ENCODE measurements at regions of chr5 and their contacts with region 1.

Region 1: GRCh38 chr5:100903039-100903887 is at the start of gene ST8SIA4:
- DNase-seq: peak; percentile 86 to 97 (median 89)
- H3K4me3 ChIP-seq: peak within 1 kb of the TSS; percentile 88 to 89
- H3K4me3 Mint-ChIP-seq: peak within 1 kb of the TSS; percentile 89 to 100 (median 96)
- H3K27ac ChIP-seq: peak within 1 kb of the TSS; percentile 91
- H3K27ac Mint-ChIP-seq: peak within 1 kb of the TSS; percentile 97 to 98 (median 98)
- H3K4me1 ChIP-seq: peaks cover 34% of the 10 kb centered on the region
- H3K4me1 Mint-ChIP-seq: peaks cover 26 to 70% (median 42%) of the 10 kb centered on the region in 4 donors
- H3K27me3 ChIP-seq: no peaks in the 10 kb centered on the region
- H3K27me3 Mint-ChIP-seq: no peaks in the 10 kb centered on the region
- total RNA-seq, gene ST8SIA4: 27.7 to 28.7 TPM

Region 2: GRCh38 chr5:99032234-99033013 is 1870.8 kb before region 1 on chr5:
- CTCF ChIA-PET with region 1: no interaction called
- POLR2A ChIA-PET with region 1: interaction called, 3 read pairs
- intact Hi-C with region 1: loop called (anchors 5 kb)
- DNase-seq: peak in 3 of 5 donors; percentile 18 to 21 (median 19)
- H3K4me3 ChIP-seq: peak overlapping the region in 1 of 2 donors; percentile 33
- H3K4me3 Mint-ChIP-seq: peak overlapping the region; percentile 82 to 92 (median 88)
- H3K27ac ChIP-seq: peak overlapping the region; percentile 71
- H3K27ac Mint-ChIP-seq: peak overlapping the region; percentile 90 to 99 (median 98)
- H3K4me1 ChIP-seq: peaks cover 69% of the 10 kb centered on the region
- H3K4me1 Mint-ChIP-seq: peaks cover 58 to 89% (median 71%) of the 10 kb centered on the region in 4 donors
- H3K27me3 ChIP-seq: no peaks in the 10 kb centered on the region
- H3K27me3 Mint-ChIP-seq: no peaks in the 10 kb centered on the region

Region 3: GRCh38 chr5:100667161-100667630 is 236.1 kb before region 1 on chr5:
- CTCF ChIA-PET with region 1: interaction called, 10 read pairs
- POLR2A ChIA-PET with region 1: interaction called, 34 read pairs
- intact Hi-C with region 1: loop called (anchors 2 kb)
- DNase-seq: peak in 4 of 5 donors; percentile 16 to 55 (median 38)
- H3K4me3 ChIP-seq: no peak overlapping the region
- H3K4me3 Mint-ChIP-seq: peak overlapping the region in 4 of 8 donors; percentile 4 to 27 (median 15)
- H3K27ac ChIP-seq: no peak overlapping the region
- H3K27ac Mint-ChIP-seq: peak overlapping the region in 4 of 7 donors; percentile 0 to 19 (median 11)
- H3K4me1 ChIP-seq: peaks cover 18% of the 10 kb centered on the region
- H3K4me1 Mint-ChIP-seq: peaks cover 10 to 18% (median 13%) of the 10 kb centered on the region in 4 donors
- H3K27me3 ChIP-seq: no peaks in the 10 kb centered on the region
- H3K27me3 Mint-ChIP-seq: no peaks in the 10 kb centered on the region

Region 4: DNA sequence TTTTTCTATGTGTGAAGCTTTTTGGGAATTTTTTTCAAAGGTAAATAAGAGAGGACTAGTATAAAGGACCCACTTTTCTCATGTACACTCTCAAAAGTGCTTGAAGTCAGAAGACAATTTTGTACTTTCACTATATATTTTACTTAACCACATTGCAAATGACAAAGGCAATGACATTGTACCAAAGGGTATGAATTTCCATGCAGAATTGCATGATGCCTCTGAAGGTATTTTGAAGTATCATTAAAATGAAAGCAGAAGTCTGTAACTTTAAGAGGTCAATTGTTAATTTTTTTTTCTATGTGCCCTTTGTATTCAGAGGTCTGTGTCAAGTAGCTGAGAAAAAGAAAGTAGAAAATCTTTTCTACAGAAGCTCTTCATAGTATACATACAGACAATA is 84.9 kb before region 1 on chr5:
- CTCF ChIA-PET with region 1: no interaction called
- POLR2A ChIA-PET with region 1: interaction called, 12 read pairs
- intact Hi-C with region 1: no loop called
- DNase-seq: no peak
- H3K4me3 ChIP-seq: no peak overlapping the region
- H3K4me3 Mint-ChIP-seq: no peak overlapping the region
- H3K27ac ChIP-seq: no peak overlapping the region
- H3K27ac Mint-ChIP-seq: peak overlapping the region in 2 of 7 donors; percentile 69 to 74
- H3K4me1 ChIP-seq: no peaks in the 10 kb centered on the region
- H3K4me1 Mint-ChIP-seq: peaks cover 16 to 39% (median 27%) of the 10 kb centered on the region in 4 donors
- H3K27me3 ChIP-seq: no peaks in the 10 kb centered on the region
- H3K27me3 Mint-ChIP-seq: no peaks in the 10 kb centered on the region

Region 5: GRCh38 chr5:100872408-100873190 is 30.7 kb before region 1 on chr5:
- CTCF ChIA-PET with region 1: interaction called, 14 read pairs
- POLR2A ChIA-PET with region 1: interaction called, 6 read pairs
- intact Hi-C with region 1: no loop called
- DNase-seq: no peak
- H3K4me3 ChIP-seq: no peak overlapping the region
- H3K4me3 Mint-ChIP-seq: no peak overlapping the region
- H3K27ac ChIP-seq: no peak overlapping the region
- H3K27ac Mint-ChIP-seq: peak overlapping the region in 4 of 7 donors; percentile 2 to 88 (median 58)
- H3K4me1 ChIP-seq: peaks cover 14% of the 10 kb centered on the region
- H3K4me1 Mint-ChIP-seq: peaks cover 31 to 39% (median 34%) of the 10 kb centered on the region in 4 donors
- H3K27me3 ChIP-seq: no peaks in the 10 kb centered on the region
- H3K27me3 Mint-ChIP-seq: no peaks in the 10 kb centered on the region

Region 6: DNA sequence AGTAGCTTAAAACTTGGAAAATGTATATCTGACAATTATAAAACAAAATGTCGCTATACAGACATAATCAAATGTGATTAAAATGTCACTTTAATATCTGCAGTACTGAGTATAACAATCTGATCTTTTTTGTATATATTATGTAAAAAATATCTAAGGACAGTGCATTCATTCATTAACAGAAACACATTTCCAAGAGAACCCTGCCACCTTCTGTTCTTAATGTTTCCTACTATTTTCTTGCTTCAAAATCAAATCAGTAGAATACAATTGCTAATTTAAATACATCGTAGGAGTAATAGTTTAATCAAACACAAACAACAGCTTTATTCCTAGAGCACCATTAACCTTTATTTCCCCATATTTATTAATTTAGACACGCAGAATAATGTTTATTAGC is 142.4 kb after region 1 on chr5:
- CTCF ChIA-PET with region 1: interaction called, 5 read pairs
- POLR2A ChIA-PET with region 1: interaction called, 4 read pairs
- intact Hi-C with region 1: loop called (anchors 2 kb)
- DNase-seq: peak in 4 of 5 donors; percentile 15 to 33 (median 27)
- H3K4me3 ChIP-seq: no peak overlapping the region
- H3K4me3 Mint-ChIP-seq: no peak overlapping the region
- H3K27ac ChIP-seq: no peak overlapping the region
- H3K27ac Mint-ChIP-seq: no peak overlapping the region
- H3K4me1 ChIP-seq: peaks cover 9% of the 10 kb centered on the region
- H3K4me1 Mint-ChIP-seq: peaks cover 5 to 11% (median 7%) of the 10 kb centered on the region in 4 donors
- H3K27me3 ChIP-seq: no peaks in the 10 kb centered on the region
- H3K27me3 Mint-ChIP-seq: no peaks in the 10 kb centered on the region

Region 7: DNA sequence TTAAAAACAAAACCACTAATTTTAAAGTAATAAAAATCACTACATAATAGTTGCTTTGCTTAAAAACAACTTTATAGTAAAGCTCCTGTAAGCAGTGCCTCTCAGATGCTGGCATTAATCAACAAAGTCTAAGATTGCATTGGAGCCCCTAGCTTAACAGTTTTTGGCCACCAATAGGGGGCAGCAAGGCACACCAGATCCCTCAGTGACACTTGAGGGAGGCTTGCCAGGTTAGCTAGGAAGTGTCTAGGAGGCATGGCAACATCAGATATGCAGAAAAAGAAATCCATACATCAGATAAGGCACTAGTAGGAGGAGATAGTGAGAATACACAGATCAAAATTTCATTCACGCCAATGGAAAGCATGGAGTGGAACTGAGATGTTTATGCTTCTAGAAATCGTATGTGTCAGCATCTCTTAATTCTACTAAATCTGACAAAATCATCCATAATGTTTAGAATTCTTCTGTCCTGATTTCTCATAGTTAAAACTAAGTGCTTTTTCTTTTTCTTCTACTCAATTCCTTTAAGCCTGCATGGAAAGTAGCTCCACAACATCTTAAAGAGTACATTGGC is 1778.2 kb after region 1 on chr5:
- CTCF ChIA-PET with region 1: no interaction called
- POLR2A ChIA-PET with region 1: no interaction called
- intact Hi-C with region 1: no loop called
- DNase-seq: peak; percentile 30 to 43 (median 34)
- H3K4me3 ChIP-seq: no peak overlapping the region
- H3K4me3 Mint-ChIP-seq: no peak overlapping the region
- H3K27ac ChIP-seq: no peak overlapping the region
- H3K27ac Mint-ChIP-seq: peak overlapping the region in 2 of 7 donors; percentile 2 to 21
- H3K4me1 ChIP-seq: no peaks in the 10 kb centered on the region
- H3K4me1 Mint-ChIP-seq: peaks cover 0 to 1% (median 0%) of the 10 kb centered on the region in 4 donors
- H3K27me3 ChIP-seq: no peaks in the 10 kb centered on the region
- H3K27me3 Mint-ChIP-seq: peaks cover 0 to 2% of the 10 kb centered on the region in 2 donors

Measured in CD4-positive, alpha-beta memory T cell (primary cell).